CD4-positive, alpha-beta memory T cell (primary cell): ENCODE measurements at regions of chrX and their contacts with region 1.

Region 1: GRCh38 chrX:47321386-47321785 is 49.0 kb upstream of the ZNF157 start:
- DNase-seq: no peak
- H3K4me3 ChIP-seq: no peak overlapping the region
- H3K4me3 Mint-ChIP-seq: no peak overlapping the region
- H3K27ac ChIP-seq: no peak overlapping the region
- H3K27ac Mint-ChIP-seq: no peak overlapping the region
- H3K4me1 ChIP-seq: no peaks in the 10 kb centered on the region
- H3K4me1 Mint-ChIP-seq: no peaks in the 10 kb centered on the region
- H3K27me3 ChIP-seq: no peaks in the 10 kb centered on the region
- H3K27me3 Mint-ChIP-seq: no peaks in the 10 kb centered on the region

Region 2: GRCh38 chrX:46791927-46792839 is 529.2 kb before region 1 on chrX:
- CTCF ChIA-PET with region 1: no interaction called
- POLR2A ChIA-PET with region 1: no interaction called
- intact Hi-C with region 1: no loop called
- DNase-seq: peak in 3 of 5 donors; percentile 3 to 37 (median 3)
- H3K4me3 ChIP-seq: no peak overlapping the region
- H3K4me3 Mint-ChIP-seq: peak overlapping the region in 3 of 8 donors; percentile 9 to 57 (median 51)
- H3K27ac ChIP-seq: no peak overlapping the region
- H3K27ac Mint-ChIP-seq: peak overlapping the region in 3 of 7 donors; percentile 25 to 81 (median 50)
- H3K4me1 ChIP-seq: peaks cover 8% of the 10 kb centered on the region
- H3K4me1 Mint-ChIP-seq: peaks cover 0 to 20% (median 8%) of the 10 kb centered on the region in 4 donors
- H3K27me3 ChIP-seq: no peaks in the 10 kb centered on the region
- H3K27me3 Mint-ChIP-seq: no peaks in the 10 kb centered on the region

Region 3: GRCh38 chrX:47264483-47265173 is 56.8 kb before region 1 on chrX:
- CTCF ChIA-PET with region 1: no interaction called
- POLR2A ChIA-PET with region 1: no interaction called
- intact Hi-C with region 1: loop called (anchors 2 kb)
- DNase-seq: no peak
- H3K4me3 ChIP-seq: no peak overlapping the region
- H3K4me3 Mint-ChIP-seq: no peak overlapping the region
- H3K27ac ChIP-seq: no peak overlapping the region
- H3K27ac Mint-ChIP-seq: no peak overlapping the region
- H3K4me1 ChIP-seq: no peaks in the 10 kb centered on the region
- H3K4me1 Mint-ChIP-seq: no peaks in the 10 kb centered on the region
- H3K27me3 ChIP-seq: no peaks in the 10 kb centered on the region
- H3K27me3 Mint-ChIP-seq: no peaks in the 10 kb centered on the region

Region 4: DNA sequence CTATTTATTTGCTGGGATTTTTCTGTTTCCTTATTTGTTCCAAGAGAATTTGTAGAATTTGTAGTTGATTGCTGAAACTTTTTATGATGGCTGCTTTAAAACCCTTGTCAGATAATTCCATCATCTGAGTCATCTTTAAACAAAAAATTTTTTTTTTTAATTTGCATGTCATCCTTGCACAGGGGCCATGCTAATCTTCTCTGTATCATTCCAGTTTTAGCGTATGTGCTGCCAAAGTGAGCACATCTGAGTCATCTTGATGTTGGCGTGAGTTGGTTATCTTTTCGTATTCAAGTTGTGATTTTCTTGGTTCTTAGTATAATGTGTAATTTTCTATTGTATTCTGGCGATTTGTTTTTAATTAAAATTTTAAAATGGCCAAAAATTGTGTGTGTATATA is 30.3 kb after region 1 on chrX:
- CTCF ChIA-PET with region 1: no interaction called
- POLR2A ChIA-PET with region 1: no interaction called
- intact Hi-C with region 1: no loop called
- DNase-seq: no peak
- H3K4me3 ChIP-seq: no peak overlapping the region
- H3K4me3 Mint-ChIP-seq: no peak overlapping the region
- H3K27ac ChIP-seq: no peak overlapping the region
- H3K27ac Mint-ChIP-seq: no peak overlapping the region
- H3K4me1 ChIP-seq: no peaks in the 10 kb centered on the region
- H3K4me1 Mint-ChIP-seq: no peaks in the 10 kb centered on the region
- H3K27me3 ChIP-seq: no peaks in the 10 kb centered on the region
- H3K27me3 Mint-ChIP-seq: no peaks in the 10 kb centered on the region